ENCODE measurements at regions of chrX and their contacts with region 1.

Region 1: GRCh38 chrX:48801280-48802088 is at the start of gene HDAC6:
- DNase-seq: peak; percentile 88 to 90
- H3K4me3 ChIP-seq: peak within 1 kb of the TSS; percentile 58; the same call in 1 of the 2 replicates
- H3K27ac ChIP-seq: peak within 1 kb of the TSS; percentile 87
- H3K4me1 ChIP-seq: no peaks in the 10 kb centered on the region
- H3K27me3 ChIP-seq: no peaks in the 10 kb centered on the region
- CTCF ChIP-seq: no peak
- total RNA-seq, gene HDAC6: 44.2 and 48.5 TPM in 2 replicates

Region 2: DNA sequence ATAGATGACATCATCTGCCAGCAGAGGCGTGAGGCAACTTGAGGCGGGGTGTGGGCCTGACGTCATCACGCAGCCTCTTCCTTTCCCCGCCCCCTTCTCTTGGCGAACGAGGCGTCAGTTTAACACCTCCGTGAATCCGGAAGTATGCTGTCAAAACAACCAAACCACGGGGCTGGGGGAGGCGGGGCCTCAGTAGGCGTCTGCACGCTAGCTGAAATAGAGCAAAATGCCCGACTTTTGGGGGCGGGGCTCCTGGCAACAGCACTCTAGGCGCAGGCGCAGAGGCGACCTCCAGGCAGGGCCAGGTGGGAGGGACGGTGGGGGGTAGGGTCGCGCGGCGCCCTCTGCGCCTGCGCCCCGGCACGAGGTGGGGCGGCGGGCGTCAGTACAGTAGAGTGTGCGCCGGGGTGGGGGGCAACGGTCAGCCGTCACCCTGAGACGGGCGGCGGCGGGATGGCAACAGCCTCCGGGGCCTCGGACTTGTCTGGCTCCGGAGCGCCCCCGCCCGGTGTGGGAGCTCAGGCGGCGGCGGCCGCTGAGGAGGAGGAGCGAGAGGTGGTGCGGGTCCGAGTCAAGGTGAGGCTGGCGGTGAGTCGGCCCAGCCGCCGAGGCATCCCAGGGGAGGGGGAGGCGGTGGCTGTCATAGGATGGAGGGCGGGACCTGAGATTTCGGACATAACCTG is 262.0 kb before region 1 on chrX and contains the start of gene TBC1D25:
- CTCF ChIA-PET with region 1: no interaction called
- POLR2A ChIA-PET with region 1: interaction called, 14 read pairs
- intact Hi-C with region 1: no loop called
- DNase-seq: peak; percentile 81 to 90
- H3K4me3 ChIP-seq: peak within 1 kb of the TSS; percentile 54; the same call in 1 of the 2 replicates
- H3K27ac ChIP-seq: 0 out of 2 replicates have a peak within 1 kb of the TSS, but pooled peaks have one; percentile 26
- H3K4me1 ChIP-seq: no peaks in the 10 kb centered on the region
- H3K27me3 ChIP-seq: no peaks in the 10 kb centered on the region
- CTCF ChIP-seq: peak; percentile 40; the same call in 1 of the 2 replicates
- total RNA-seq, gene TBC1D25: 7.4 and 9.0 TPM in 2 replicates

Region 3: GRCh38 chrX:48826135-48826875 is 24.8 kb after region 1 on chrX and contains the start of gene ERAS:
- CTCF ChIA-PET with region 1: no interaction called
- POLR2A ChIA-PET with region 1: no interaction called
- intact Hi-C with region 1: no loop called
- DNase-seq: no peak
- H3K4me3 ChIP-seq: no peak within 1 kb of the TSS
- H3K27ac ChIP-seq: no peak within 1 kb of the TSS
- H3K4me1 ChIP-seq: no peaks in the 10 kb centered on the region
- H3K27me3 ChIP-seq: no peaks in the 10 kb centered on the region
- CTCF ChIP-seq: no peak
- total RNA-seq, gene ERAS: 0.50 TPM in 1 of 2 replicates, not detected in the other

Region 4: DNA sequence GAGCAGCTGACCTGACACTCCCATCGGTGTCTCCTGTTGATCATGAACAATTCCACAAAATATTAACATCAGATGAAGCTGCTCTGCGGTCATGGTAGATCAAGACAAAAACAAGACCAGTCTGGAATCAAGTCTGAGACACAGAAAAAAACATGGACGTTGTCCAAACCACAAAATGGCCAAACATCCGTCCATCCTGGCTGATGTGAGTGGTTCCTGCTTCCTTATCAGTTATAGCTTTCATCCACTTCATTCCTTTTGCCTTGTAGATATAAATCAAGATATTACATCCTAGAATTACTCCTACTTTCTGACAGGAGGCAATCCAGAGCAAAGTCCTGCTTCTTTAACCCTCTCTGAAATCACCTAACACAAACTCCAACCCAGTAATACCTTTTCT is 62.7 kb after region 1 on chrX:
- CTCF ChIA-PET with region 1: no interaction called
- POLR2A ChIA-PET with region 1: no interaction called
- intact Hi-C with region 1: no loop called
- DNase-seq: peak; percentile 37 to 74
- H3K4me3 ChIP-seq: no peak overlapping the region
- H3K27ac ChIP-seq: peak overlapping the region; percentile 60
- H3K4me1 ChIP-seq: peaks cover 7% of the 10 kb centered on the region; the same call in 1 of the 2 replicates
- H3K27me3 ChIP-seq: no peaks in the 10 kb centered on the region
- CTCF ChIP-seq: no peak

Region 5: DNA sequence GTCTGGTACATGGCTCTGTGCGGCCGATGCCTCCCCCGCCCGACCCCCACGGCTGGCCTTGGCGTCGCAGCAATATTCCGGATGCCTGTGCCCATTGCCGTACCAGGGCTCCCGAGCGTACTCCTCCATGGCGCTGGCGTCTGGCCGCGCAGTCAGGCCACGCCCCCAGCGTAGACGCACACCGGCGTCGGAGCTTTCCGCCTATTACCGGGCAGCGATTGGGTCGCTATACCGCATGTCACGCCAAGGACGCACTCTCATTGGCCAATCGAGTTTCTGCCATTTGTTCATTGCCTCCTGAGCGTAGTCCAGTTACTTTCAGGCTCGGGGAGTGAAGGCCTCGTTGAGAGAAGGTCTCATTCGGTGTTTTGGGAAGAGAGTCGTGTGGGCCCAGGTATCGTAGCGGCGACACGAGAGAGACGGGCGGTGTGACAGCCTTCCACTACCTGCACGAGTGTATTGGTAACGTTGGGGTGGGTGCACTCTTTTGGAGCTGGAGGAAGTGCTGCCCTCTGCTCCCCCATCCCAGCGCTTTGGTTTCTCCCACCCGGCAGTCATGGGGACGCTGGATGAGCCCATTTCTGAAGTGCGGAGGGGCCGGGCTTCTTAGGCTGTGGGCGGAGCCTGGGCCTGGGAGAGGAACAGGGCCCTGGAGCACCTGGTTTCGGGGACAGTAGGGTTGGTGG is 96.3 kb after region 1 on chrX and contains the starts of genes PQBP1 and TIMM17B:
- CTCF ChIA-PET with region 1: no interaction called
- POLR2A ChIA-PET with region 1: interaction called, 4 read pairs
- intact Hi-C with region 1: loop called (anchors 5 kb)
- DNase-seq: peak; percentile 77 to 86
- H3K4me3 ChIP-seq: peak within 1 kb of the TSS; percentile 59
- H3K27ac ChIP-seq: peak within 1 kb of the TSS; percentile 84
- H3K4me1 ChIP-seq: no peaks in the 10 kb centered on the region
- H3K27me3 ChIP-seq: no peaks in the 10 kb centered on the region
- CTCF ChIP-seq: no peak
- total RNA-seq, gene PQBP1: 36.4 and 39.4 TPM in 2 replicates
- total RNA-seq, gene TIMM17B: 44.9 and 54.1 TPM in 2 replicates

Region 6: DNA sequence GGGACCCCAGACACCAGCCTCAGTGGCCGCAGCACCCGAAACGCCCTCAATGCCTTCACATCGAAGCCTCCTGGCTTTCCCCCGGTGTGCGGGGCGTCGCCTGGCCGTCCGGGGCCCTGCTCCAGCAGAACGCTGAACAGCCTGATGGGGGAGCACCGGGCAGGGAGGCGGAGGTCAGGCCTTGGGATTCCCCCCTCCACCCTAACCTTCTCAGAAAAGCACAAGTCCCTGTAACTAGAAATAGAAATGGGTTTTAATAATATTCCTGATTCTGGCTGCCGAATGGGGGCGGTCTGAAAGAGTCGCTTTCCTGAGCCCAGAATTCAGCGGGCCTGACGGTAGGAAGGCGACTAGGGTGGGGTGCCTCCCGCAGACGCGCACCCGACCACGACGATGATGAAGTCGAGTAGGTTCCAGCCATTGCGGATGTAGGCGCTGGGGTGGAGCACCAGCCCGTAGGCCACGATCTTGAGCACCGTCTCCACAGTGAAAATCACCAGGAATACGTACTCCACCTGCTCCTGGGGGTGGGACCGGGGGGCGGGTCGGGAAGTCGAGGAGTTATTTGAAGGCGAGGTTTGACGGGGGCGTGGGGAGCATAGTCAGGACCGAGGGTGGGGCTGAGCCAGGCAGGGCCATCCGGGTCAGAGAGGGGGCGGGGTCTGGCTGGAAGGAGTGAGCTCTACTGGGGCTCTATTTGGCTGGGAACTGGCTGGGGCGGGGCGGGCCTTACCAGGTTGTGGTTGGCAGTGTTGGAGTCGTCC is 429.2 kb after region 1 on chrX:
- CTCF ChIA-PET with region 1: no interaction called
- POLR2A ChIA-PET with region 1: no interaction called
- intact Hi-C with region 1: no loop called
- DNase-seq: peak; percentile 36 to 50
- H3K4me3 ChIP-seq: peak overlapping the region; percentile 48; the same call in 1 of the 2 replicates
- H3K27ac ChIP-seq: no peak overlapping the region
- H3K4me1 ChIP-seq: no peaks in the 10 kb centered on the region
- H3K27me3 ChIP-seq: no peaks in the 10 kb centered on the region
- CTCF ChIP-seq: peak; percentile 19; the same call in 1 of the 2 replicates